GM18951 (cell line): ENCODE measurements at regions of chr1 and their contacts with region 1.

Region 1: DNA sequence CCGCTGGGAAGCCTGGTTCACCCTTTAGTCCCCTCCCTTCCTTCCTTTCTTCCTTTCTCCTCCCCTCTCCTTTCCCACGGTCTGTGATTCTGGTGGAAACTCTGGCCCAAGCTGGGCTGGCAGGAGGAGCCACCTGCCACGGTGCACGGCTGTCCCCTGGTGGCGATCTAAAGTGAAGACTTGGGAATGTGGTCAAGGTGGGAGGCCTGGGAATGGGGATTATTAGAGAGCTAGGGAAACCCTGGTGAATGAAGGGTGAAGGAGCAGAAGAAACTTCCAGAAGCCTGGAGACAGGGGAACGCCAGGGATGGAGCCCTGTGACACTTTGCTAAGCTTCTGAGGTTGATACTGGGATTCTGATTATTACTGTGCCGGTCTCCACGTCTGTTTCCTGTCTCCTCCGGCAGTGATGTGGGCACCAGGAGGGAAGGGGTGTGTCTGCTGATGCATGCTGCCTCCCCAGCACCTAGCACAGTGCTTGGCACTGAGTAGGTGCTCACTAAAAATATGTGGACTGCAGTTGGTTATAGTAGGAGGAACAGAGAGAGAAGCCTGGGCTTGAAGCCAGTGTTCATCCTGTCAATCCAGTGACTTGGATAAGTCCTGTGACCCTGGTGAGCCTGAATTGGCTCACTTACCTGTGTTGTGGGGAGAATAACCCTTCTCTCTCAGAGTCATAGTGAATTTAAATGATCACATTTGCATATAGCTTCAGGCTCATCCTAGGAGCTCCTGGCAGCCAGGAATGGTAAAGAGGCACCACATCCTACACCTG is 71.2 kb upstream of the NBPF3 start:
- POLR2A ChIP-seq: no peak

Region 2: GRCh38 chr1:21255278-21255942 is 113.3 kb before region 1 on chr1:
- in situ Hi-C with region 1: loop called (anchors 5 kb)
- POLR2A ChIP-seq: no peak

Region 3: DNA sequence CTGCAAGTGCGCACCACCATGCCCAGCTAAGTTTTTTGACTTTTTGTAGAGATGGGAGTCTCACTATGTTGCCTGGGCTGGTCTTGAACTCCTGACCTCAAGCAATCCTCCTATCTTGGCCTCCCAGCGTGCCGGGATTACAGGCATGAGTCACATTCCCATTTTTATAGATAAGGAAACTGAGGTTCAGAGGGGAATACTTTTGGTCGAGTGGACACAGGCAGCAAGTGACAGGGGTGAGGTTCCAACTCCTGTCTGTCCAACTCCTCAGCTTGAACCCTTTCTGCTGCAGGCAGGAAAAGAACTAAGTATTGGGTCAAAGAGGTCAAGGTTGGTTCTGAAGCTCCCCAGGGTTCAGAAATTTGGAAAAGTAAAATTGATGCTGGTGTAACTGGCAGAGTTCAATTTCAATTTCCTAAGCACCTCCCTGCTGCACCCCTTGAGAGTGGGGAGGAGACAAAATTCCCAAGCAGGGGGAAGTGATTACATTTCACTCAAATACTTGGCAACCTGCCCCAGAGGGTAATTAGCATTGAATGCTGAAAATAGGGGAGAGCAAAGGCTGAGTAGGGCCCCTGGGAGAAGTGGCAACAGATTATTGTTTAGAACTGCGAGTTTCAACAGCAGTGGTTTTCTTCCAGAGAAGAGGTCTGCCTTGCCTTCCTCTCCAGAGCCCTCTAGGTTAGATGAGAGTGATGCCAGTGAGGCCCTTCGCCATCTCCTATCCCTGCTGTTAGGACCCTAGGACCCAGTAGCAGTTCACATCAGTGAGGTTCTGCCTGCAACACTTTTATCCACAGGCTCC is 123.1 kb after region 1 on chr1:
- in situ Hi-C with region 1: no loop called
- POLR2A ChIP-seq: no peak

Region 4: GRCh38 chr1:22096036-22096435 is 727.3 kb after region 1 on chr1:
- in situ Hi-C with region 1: no loop called
- POLR2A ChIP-seq: no peak